Psoas muscle (tissue), 8 donors: ENCODE measurements at regions of chr5 and their contacts with region 1.

Region 1: DNA sequence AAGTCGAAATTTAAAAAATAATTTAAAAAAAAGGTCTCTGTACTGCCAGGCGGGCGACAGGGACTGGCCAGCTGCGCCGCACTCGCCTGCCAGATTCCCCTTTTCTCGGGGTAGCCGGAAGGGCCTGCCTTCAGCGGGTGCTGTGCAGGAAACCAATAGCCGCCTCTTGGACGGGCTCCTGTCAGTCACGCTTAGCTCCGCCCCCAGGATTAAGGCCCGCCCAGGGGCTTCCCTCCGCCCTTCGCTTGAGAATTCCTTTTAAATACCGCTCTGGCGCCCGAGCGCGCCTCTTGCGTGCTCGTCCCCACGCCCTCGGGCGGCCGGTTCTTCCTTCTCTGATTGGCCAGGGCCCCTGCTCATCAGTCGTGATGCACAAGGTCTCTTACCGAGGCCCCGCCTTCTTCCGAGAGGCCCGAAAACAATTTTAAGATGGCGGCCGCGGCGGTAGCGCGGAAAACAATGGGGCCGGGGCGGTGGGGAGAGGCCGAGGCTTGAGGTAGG is at the start of gene MAML1:
- DNase-seq: peak; percentile 100
- ATAC-seq: peak; percentile 97 to 99 (median 98)
- H3K4me3 ChIP-seq: peak within 1 kb of the TSS; percentile 73
- H3K27ac ChIP-seq: peak within 1 kb of the TSS; percentile 94
- H3K4me1 ChIP-seq: peaks cover 43% of the 10 kb centered on the region
- H3K27me3 ChIP-seq: no peaks in the 10 kb centered on the region
- CTCF ChIP-seq: no peak
- total RNA-seq, gene MAML1: 11.2 to 16.0 (median 12.3) TPM

Region 2: GRCh38 chr5:179818746-179819295 is 86.4 kb after region 1 on chr5:
- intact Hi-C with region 1: loop called in 1 of 2 experiments (anchors 1 kb)
- DNase-seq: peak; percentile 95 to 98
- ATAC-seq: peak; percentile 71 to 79 (median 77)
- H3K4me3 ChIP-seq: peak overlapping the region; percentile 99
- H3K27ac ChIP-seq: peak overlapping the region; percentile 100
- H3K4me1 ChIP-seq: peaks cover 43% of the 10 kb centered on the region
- H3K27me3 ChIP-seq: no peaks in the 10 kb centered on the region
- CTCF ChIP-seq: no peak

Region 3: GRCh38 chr5:180343831-180344327 is 611.4 kb after region 1 on chr5:
- intact Hi-C with region 1: no loop called
- DNase-seq: peak; percentile 56 to 70
- ATAC-seq: peak in 2 of 4 donors; percentile 40 to 64
- H3K4me3 ChIP-seq: no peak overlapping the region
- H3K27ac ChIP-seq: no peak overlapping the region
- H3K4me1 ChIP-seq: no peaks in the 10 kb centered on the region
- H3K27me3 ChIP-seq: no peaks in the 10 kb centered on the region
- CTCF ChIP-seq: no peak